Gastrocnemius medialis (tissue), 4 donors: ENCODE measurements at regions of chr1 and their contacts with region 1.

Region 1: GRCh38 chr1:20974069-20974468 is 187.0 kb upstream of the HP1BP3 start:
- DNase-seq: no peak
- ATAC-seq: no peak
- H3K4me3 ChIP-seq: no peak overlapping the region
- H3K27ac ChIP-seq: no peak overlapping the region
- H3K4me1 ChIP-seq: peaks cover under 1% of the 10 kb centered on the region in 2 donors
- H3K27me3 ChIP-seq: no peaks in the 10 kb centered on the region
- CTCF ChIP-seq: no peak
- POLR2A ChIP-seq: no peak

Region 2: GRCh38 chr1:21184276-21184675 is 210.2 kb after region 1 on chr1:
- in situ Hi-C with region 1: loop called in 3 of 4 experiments (anchors 10 to 25 kb)
- intact Hi-C with region 1: no loop called
- DNase-seq: no peak
- ATAC-seq: no peak
- H3K4me3 ChIP-seq: no peak overlapping the region
- H3K27ac ChIP-seq: no peak overlapping the region
- H3K4me1 ChIP-seq: no peaks in the 10 kb centered on the region
- H3K27me3 ChIP-seq: no peaks in the 10 kb centered on the region
- CTCF ChIP-seq: no peak
- POLR2A ChIP-seq: no peak